A549 (cell line): ENCODE measurements at regions of chr12 and their contacts with region 1.

Region 1: DNA sequence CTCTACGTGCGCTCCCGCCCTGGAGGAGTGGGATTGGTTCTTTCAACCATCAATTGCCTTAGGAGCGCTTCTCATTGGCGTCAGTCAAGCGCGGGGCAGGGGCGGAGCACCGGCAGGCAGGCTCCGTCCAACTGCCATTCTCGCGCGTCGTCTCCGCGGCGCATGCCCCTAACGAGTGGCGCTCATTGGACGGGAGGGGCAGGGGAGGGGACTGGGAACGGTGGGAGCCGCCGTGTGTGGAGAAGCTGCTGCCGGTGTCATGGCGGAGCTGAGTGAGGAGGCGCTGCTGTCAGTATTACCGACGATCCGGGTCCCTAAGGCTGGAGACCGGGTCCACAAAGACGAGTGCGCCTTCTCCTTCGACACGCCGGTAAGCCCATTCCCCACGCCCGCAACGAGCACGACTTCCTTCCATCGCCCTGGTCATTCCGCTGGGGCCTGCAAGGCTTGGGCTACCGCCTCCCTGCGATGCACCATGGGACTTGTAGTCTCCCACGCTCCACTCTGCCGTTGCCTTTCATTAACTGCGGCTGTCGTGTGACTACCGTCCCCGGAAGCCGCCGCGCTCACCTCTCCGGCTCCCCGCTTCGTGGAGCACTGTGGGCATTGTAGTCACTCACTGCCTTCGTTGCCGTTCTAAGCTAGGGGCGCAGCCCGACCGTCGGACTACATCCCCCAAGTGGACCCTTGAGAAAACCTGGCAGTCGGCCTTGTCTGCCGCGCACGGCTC is at the start of gene USP5:
- DNase-seq: peak; percentile 99 to 100
- ATAC-seq: peak; percentile 88 to 91
- H3K4me3 ChIP-seq: peak within 1 kb of the TSS; percentile 50
- H3K27ac ChIP-seq: peak within 1 kb of the TSS; percentile 87 to 89
- H3K4me1 ChIP-seq: peaks cover 23% of the 10 kb centered on the region
- CTCF ChIP-seq: no peak
- EP300 ChIP-seq: no peak
- POLR2A ChIP-seq: peak; percentile 80
- RAD21 ChIP-seq: no peak
- polyA plus RNA-seq, gene USP5: 58.6 and 64.5 TPM in 2 replicates

Region 2: GRCh38 chr12:6723607-6724396 is 128.3 kb before region 1 on chr12 and contains the start of gene COPS7A:
- CTCF ChIA-PET with region 1: no interaction called
- POLR2A ChIA-PET with region 1: interaction called, 15 read pairs
- DNase-seq: peak; percentile 99
- ATAC-seq: peak; percentile 98
- H3K4me3 ChIP-seq: peak within 1 kb of the TSS; percentile 61
- H3K27ac ChIP-seq: peak within 1 kb of the TSS; percentile 86 to 89
- H3K4me1 ChIP-seq: peaks cover 13% of the 10 kb centered on the region
- CTCF ChIP-seq: no peak
- EP300 ChIP-seq: no peak
- POLR2A ChIP-seq: peak; percentile 92
- RAD21 ChIP-seq: no peak
- polyA plus RNA-seq, gene COPS7A: 78.8 and 95.0 TPM in 2 replicates

Region 3: DNA sequence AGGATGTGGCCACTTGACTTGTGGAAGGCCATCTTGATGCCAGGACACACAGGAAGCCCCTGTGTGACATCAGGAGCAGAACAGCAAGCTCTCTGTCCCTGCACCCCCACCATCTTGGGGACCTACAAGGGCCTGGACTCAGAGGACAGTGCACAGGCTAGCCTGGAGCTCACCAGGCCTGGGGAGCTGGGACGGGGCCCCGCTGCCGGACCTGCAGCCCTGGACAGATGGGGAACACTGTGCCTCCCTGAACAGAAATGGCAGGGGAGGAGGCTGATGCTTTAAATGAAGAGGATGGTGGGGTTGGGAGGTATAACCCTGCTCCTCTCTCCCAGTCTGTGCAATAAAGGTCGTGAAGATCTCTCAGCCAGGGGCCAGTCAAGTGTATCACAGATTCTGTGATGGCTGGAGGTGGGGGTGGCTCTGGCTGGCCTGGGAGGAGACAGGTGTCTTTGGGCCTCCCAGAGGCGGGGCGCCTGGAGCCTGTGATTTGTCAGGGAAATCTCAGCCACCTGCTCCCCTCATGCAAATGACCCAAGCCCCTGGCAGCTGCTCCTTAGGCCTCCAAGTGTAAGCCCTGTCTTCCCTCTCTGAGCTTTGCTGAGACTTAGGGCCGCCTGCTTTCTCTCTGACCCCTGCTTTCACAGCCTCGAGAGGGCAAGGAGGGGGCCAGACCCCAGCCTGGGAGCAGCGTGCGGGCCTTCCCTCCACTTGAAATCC is 12.4 kb before region 1 on chr12:
- CTCF ChIA-PET with region 1: interaction called, 117 read pairs
- POLR2A ChIA-PET with region 1: interaction called, 10 read pairs
- DNase-seq: no peak
- ATAC-seq: no peak
- H3K4me3 ChIP-seq: no peak overlapping the region
- H3K27ac ChIP-seq: no peak overlapping the region
- H3K4me1 ChIP-seq: no peaks in the 10 kb centered on the region
- CTCF ChIP-seq: no peak
- EP300 ChIP-seq: no peak
- POLR2A ChIP-seq: no peak
- RAD21 ChIP-seq: no peak

Region 4: GRCh38 chr12:6890789-6891645 is 38.9 kb after region 1 on chr12:
- CTCF ChIA-PET with region 1: interaction called, 9 read pairs
- POLR2A ChIA-PET with region 1: interaction called, 12 read pairs
- DNase-seq: peak; percentile 93 to 99
- ATAC-seq: peak; percentile 95 to 96
- H3K4me3 ChIP-seq: peak overlapping the region; percentile 40
- H3K27ac ChIP-seq: peak overlapping the region; percentile 94 to 98
- H3K4me1 ChIP-seq: peaks cover 38% of the 10 kb centered on the region
- CTCF ChIP-seq: peak; percentile 95
- EP300 ChIP-seq: peak in 1 of 2 experiments; percentile 54; a peak in 1 of 5 replicates
- POLR2A ChIP-seq: peak; percentile 70
- RAD21 ChIP-seq: peak; percentile 69 to 94

Region 5: DNA sequence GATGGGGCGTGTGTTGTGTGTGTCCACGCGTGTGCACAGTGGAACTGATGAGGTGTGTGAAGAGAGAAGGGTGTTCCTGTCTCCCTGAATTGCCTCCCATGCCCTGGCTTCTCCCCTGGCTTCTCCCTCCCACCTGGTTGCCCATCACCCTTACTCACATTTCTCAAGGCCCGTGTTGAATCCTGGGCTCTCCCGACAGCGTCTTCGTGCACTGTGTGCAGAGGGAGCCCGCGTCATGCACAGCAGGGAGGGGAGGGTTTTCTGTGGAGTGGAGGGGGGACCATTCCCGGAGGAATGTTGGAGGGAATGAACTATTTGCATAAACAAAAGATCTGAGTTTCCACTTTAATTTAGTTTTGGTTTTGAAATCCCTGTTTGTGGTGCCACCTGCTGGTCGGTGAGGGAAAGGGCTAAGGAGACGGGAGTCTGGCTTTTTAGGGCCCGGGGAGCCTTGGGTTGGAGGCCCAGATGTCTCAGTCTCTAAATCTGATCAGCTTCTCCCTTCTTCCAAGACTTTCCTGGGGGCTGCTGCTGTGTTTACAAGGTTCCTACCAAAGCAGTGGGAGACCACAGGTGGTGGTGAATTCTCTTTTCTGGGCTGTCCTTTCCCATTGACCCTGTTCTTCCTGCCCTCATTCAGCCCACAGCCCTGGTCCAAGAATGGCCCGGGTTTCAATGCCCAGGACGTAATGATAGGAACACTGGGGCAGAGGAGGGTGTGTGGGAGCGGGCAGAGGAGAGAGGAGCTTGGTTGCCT is 240.3 kb after region 1 on chr12 and contains the start of gene C1R:
- CTCF ChIA-PET with region 1: no interaction called
- POLR2A ChIA-PET with region 1: no interaction called
- DNase-seq: peak; percentile 69 to 72
- ATAC-seq: peak; percentile 52 to 80
- H3K4me3 ChIP-seq: peak within 1 kb of the TSS; percentile 37
- H3K27ac ChIP-seq: peak within 1 kb of the TSS; percentile 85 to 91
- H3K4me1 ChIP-seq: peaks cover 20% of the 10 kb centered on the region; the same call in 2 of the 3 replicates
- CTCF ChIP-seq: peak; percentile 92
- EP300 ChIP-seq: no peak
- POLR2A ChIP-seq: no peak
- RAD21 ChIP-seq: peak; percentile 88 to 92
- polyA plus RNA-seq, gene C1R: 36.0 and 57.8 TPM in 2 replicates